ENCODE measurements at regions of chr14 and their contacts with region 1.

Region 1: DNA sequence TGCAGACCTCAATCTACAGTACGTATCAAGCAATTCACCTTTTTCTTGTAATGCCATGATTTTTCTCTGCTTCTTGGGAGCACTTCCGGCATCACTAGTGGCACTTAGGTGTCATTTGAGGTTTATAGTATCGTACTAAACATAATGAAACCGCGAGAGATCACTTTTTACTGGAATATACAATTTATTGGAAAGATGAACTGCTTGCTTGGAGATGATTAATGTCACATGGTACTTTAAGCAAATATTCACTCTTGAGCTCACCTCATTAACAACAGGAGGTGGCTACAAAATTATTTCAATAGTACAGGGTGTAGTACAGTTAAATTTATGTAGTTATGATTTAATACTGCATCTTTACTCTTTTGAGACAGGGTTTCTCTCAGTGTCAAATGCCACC is 11.5 kb downstream of the FUT8 start:
- DNase-seq: peak; percentile 65
- ATAC-seq: peak; percentile 76
- H3K4me3 ChIP-seq: peak overlapping the region; percentile 44
- H3K27ac ChIP-seq: peak overlapping the region; percentile 63
- H3K4me1 ChIP-seq: peaks cover 44% of the 10 kb centered on the region
- H3K27me3 ChIP-seq: no peaks in the 10 kb centered on the region
- CTCF ChIP-seq: no peak

Region 2: DNA sequence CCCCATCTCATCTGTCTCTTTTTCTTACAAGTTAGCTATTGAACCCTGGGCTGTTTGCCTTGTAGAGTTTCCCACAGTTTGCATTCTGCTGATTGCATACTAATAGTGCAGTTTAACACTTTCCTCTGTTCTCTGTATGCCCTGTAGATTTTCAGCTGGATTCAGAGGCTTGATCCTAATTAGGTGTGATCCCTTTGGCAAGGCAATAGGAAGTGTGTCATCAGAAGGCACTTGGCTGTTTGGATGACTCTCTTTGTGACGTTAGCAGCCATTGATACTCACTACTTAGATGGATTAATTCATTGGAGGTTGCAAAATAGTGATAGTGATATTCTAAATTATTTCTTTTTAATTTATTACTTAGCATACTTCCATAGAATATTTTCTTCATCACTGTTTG is 22.2 kb after region 1 on chr14:
- CTCF ChIA-PET with region 1: no interaction called
- POLR2A ChIA-PET with region 1: interaction called, 4 read pairs
- intact Hi-C with region 1: loop called (anchors 2 kb)
- DNase-seq: no peak
- ATAC-seq: no peak
- H3K4me3 ChIP-seq: no peak overlapping the region
- H3K27ac ChIP-seq: no peak overlapping the region
- H3K4me1 ChIP-seq: peaks cover 11% of the 10 kb centered on the region
- H3K27me3 ChIP-seq: no peaks in the 10 kb centered on the region
- CTCF ChIP-seq: no peak

Region 3: GRCh38 chr14:65478596-65478995 is 54.6 kb after region 1 on chr14:
- CTCF ChIA-PET with region 1: no interaction called
- POLR2A ChIA-PET with region 1: no interaction called
- intact Hi-C with region 1: loop called (anchors 2 kb)
- DNase-seq: peak; percentile 38
- ATAC-seq: peak; percentile 86
- H3K4me3 ChIP-seq: no peak overlapping the region
- H3K27ac ChIP-seq: no peak overlapping the region
- H3K4me1 ChIP-seq: peaks cover 23% of the 10 kb centered on the region; the same call in 1 of the 2 replicates
- H3K27me3 ChIP-seq: no peaks in the 10 kb centered on the region
- CTCF ChIP-seq: no peak

Region 4: DNA sequence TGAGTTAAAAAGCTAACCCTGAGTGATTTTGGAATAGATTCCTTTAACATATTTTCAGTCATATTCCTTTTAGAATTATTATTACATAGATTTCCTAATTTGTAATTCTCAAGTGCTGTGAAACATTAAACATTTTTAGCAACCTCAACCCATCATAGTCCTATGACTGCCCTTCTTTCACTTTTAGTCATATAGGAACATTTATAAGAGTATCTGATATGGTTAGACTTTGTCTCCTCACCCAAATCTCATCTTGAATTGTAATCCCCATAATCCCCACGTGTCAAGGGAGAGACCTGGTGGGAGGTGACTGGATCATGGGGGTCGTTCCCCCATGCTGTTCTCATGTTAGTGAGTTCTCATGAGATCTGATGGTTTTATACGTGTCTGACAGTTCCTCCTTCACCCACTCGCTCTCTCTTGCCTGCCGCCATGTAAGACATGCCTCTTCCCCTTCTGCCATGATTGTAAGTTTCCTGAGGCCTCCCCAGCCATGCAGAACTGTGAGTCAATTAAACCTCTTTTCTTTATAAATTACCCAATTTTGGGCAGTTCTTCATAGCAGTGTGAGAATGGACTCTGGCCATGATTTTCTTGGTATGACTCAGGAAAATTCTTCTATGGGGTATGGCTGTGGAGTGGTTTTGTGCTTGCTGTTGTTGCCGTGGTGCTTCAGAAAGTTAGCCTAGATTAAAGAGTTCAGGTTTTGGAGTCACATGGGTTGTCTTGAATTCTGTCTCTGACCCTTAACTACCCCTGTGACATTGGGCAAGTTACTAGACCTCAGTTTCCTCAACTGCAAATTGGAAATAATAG is 72.4 kb after region 1 on chr14:
- CTCF ChIA-PET with region 1: no interaction called
- POLR2A ChIA-PET with region 1: no interaction called
- intact Hi-C with region 1: loop called (anchors 2 kb)
- DNase-seq: no peak
- ATAC-seq: peak; percentile 29
- H3K4me3 ChIP-seq: no peak overlapping the region
- H3K27ac ChIP-seq: peak overlapping the region; percentile 9; the same call in 1 of the 2 replicates
- H3K4me1 ChIP-seq: peaks cover 7% of the 10 kb centered on the region
- H3K27me3 ChIP-seq: no peaks in the 10 kb centered on the region
- CTCF ChIP-seq: no peak

Region 5: GRCh38 chr14:65599375-65599774 is 175.4 kb after region 1 on chr14:
- CTCF ChIA-PET with region 1: interaction called, 4 read pairs
- POLR2A ChIA-PET with region 1: no interaction called
- intact Hi-C with region 1: loop called (anchors 2 kb)
- DNase-seq: peak; percentile 47
- ATAC-seq: peak; percentile 87
- H3K4me3 ChIP-seq: no peak overlapping the region
- H3K27ac ChIP-seq: peak overlapping the region; percentile 78
- H3K4me1 ChIP-seq: peaks cover 25% of the 10 kb centered on the region
- H3K27me3 ChIP-seq: no peaks in the 10 kb centered on the region
- CTCF ChIP-seq: no peak

Region 6: GRCh38 chr14:65650826-65651225 is 226.8 kb after region 1 on chr14:
- CTCF ChIA-PET with region 1: no interaction called
- POLR2A ChIA-PET with region 1: interaction called, 12 read pairs
- intact Hi-C with region 1: no loop called
- DNase-seq: no peak
- ATAC-seq: no peak
- H3K4me3 ChIP-seq: no peak overlapping the region
- H3K27ac ChIP-seq: no peak overlapping the region
- H3K4me1 ChIP-seq: no peaks in the 10 kb centered on the region
- H3K27me3 ChIP-seq: no peaks in the 10 kb centered on the region
- CTCF ChIP-seq: no peak

Measured in PC-3 (cell line).